Activated CD4-positive, alpha-beta T cell treated with anti-CD3 and anti-CD28 coated beads, Interleukin-2, amount 10 ng/mL, durations not matched to agents 24 days and 14 days (primary cell): ENCODE measurements at regions of chr5 and their contacts with region 1.

Region 1: DNA sequence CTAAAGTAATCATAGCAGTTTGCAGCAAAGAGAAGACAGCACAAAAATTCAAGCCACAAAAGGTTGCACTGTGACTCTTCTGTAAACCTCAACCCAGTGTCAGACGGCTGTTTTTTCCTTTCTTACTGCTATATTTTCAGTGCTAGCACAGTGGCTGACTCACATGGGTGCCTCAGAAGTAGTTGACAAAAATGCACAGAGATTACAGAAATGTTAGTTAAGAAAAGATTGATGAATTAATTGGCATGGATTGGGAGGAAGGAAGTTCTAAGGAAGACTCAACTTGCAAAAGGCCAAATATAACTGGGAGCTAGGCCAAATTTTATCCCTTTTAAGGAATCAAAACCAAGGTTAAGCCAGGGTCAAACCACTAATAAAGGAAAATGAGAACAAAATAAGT is 43.7 kb upstream of the ITGA1 start:
- DNase-seq: peak; percentile 89
- H3K4me3 Mint-ChIP-seq: peak overlapping the region; percentile 31
- H3K27ac Mint-ChIP-seq: peak overlapping the region; percentile 76
- H3K4me1 Mint-ChIP-seq: peaks cover 49% of the 10 kb centered on the region
- H3K27me3 Mint-ChIP-seq: no peaks in the 10 kb centered on the region

Region 2: DNA sequence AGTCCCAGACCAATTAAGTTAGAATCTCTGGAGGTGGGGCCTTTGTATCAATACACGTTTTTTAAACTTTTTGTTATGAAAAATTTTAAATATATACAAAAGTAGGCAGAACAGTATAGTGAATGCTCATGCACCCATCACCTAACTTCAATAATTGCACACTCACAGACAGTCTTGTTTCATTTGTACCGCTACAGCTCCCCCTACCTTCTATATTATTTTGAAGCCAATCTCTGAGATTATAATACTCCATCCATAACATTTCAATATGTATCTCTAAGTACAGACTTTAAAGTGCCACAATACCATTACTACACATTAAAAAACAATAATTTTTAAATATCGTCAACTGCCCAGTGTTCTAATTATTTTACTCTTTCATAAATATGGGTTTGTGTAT is 1327.8 kb before region 1 on chr5:
- intact Hi-C with region 1: no loop called
- DNase-seq: no peak
- H3K4me3 Mint-ChIP-seq: no peak overlapping the region
- H3K27ac Mint-ChIP-seq: no peak overlapping the region
- H3K4me1 Mint-ChIP-seq: no peaks in the 10 kb centered on the region
- H3K27me3 Mint-ChIP-seq: no peaks in the 10 kb centered on the region

Region 3: DNA sequence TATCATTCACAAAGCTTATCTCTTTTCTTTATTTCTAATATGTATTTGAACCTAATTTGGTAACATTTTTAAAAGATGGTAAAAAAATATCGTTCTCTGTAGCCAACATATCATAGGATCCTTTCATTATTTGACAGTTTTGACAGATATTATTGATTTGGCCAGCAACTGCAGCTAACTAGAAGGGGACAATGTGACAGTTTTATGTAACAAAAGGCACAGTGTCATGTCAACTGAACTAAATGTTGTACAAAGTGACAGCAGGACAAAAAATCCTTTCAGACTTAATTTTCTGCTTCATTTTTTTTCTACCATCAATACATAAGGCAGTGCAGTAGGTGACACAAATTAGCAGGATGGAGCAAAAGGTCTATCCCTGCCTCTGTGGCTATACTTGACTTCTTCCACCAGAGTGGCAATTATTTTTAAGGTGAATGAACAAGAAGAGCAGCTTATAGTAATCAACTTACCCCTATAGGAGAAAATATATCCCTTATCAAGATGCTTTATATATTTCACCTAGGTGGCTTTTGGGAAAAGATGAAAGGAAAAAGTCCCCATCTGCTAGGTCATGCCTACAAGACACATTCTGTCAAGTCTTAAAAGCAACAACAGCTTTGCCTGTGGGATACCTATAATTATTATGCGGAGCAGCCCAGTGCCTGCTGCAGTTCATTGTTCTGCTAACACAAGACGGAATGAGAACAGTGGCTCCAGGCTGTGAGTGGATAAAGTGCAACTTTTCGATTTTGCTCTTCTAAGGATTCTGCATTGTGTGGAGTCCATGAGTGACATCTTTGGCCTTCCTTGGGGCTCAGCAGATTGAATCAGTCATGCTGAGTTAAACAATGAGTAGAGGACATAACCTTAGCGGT is 665.8 kb before region 1 on chr5:
- intact Hi-C with region 1: no loop called
- DNase-seq: no peak
- H3K4me3 Mint-ChIP-seq: no peak overlapping the region
- H3K27ac Mint-ChIP-seq: no peak overlapping the region
- H3K4me1 Mint-ChIP-seq: no peaks in the 10 kb centered on the region
- H3K27me3 Mint-ChIP-seq: no peaks in the 10 kb centered on the region

Region 4: GRCh38 chr5:52674815-52675545 is 69.0 kb before region 1 on chr5:
- intact Hi-C with region 1: no loop called
- DNase-seq: no peak
- H3K4me3 Mint-ChIP-seq: no peak overlapping the region
- H3K27ac Mint-ChIP-seq: no peak overlapping the region
- H3K4me1 Mint-ChIP-seq: peaks cover 10% of the 10 kb centered on the region
- H3K27me3 Mint-ChIP-seq: peaks cover 36% of the 10 kb centered on the region

Region 5: DNA sequence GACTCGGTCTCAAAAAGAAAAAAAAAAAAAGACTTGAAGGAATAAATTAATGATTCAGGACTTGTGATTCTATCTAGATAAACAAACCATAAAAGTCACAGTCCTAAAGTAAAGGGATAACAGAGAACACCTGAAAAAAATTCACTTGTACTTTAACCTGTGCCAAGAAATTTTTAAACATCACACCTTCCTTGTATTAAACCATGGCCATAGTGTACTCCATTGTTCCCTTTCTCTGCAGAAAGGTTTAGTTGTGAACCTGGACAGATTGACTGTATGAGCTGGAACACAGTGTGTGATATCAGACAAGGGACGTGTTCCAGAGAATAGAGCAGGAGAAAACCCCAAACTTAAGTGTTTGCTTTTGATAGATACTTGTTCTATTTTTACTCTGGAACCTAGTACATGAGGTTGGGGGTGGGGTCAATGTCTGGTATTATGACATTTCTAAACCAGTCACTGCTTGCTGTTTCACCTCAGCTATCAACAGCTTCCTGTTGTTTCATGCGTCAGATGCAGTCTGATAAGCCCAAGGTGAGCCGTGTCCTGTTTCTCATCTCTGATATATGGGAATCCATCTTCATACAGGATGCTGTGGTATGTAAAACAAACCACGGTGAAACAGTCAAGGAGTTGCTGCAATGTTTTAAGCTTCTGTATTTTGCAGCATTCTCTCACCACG is 18.8 kb before region 1 on chr5:
- intact Hi-C with region 1: loop called (anchors 1 kb)
- DNase-seq: peak; percentile 93
- H3K4me3 Mint-ChIP-seq: peak overlapping the region; percentile 69
- H3K27ac Mint-ChIP-seq: peak overlapping the region; percentile 90
- H3K4me1 Mint-ChIP-seq: peaks cover 50% of the 10 kb centered on the region
- H3K27me3 Mint-ChIP-seq: no peaks in the 10 kb centered on the region

Region 6: DNA sequence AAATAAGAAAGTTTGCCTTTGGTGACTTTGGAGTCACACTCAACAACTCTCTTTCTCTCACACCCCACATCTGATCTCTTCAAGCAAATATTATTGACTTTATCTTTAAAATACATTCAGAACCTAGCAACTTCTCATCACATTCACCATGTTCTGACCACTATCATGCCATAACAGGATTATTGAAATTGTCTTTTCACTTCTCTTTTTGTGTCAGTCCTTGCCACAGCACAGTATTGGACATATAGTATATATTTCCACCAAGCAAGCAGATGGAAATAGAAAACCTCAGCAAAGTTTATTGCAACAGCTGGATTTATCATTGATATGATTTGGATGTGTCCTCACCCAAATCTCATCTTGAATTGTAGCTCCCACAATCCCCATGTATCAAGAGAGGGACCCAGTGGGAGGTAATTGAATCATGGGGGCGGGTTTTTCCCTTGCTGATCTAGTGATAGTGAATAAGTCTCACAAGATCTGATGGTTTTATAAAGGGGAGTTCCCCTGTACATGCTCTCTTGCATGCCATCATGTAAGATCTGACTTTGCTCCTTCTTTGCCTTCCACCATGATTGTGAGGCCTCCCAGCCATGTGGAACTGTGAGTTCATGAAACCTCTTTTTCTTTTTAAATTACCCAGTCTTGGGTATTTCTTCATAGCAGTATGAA is 16.9 kb after region 1 on chr5:
- intact Hi-C with region 1: loop called (anchors 1 kb)
- DNase-seq: no peak
- H3K4me3 Mint-ChIP-seq: no peak overlapping the region
- H3K27ac Mint-ChIP-seq: no peak overlapping the region
- H3K4me1 Mint-ChIP-seq: peaks cover 12% of the 10 kb centered on the region
- H3K27me3 Mint-ChIP-seq: no peaks in the 10 kb centered on the region

Region 7: DNA sequence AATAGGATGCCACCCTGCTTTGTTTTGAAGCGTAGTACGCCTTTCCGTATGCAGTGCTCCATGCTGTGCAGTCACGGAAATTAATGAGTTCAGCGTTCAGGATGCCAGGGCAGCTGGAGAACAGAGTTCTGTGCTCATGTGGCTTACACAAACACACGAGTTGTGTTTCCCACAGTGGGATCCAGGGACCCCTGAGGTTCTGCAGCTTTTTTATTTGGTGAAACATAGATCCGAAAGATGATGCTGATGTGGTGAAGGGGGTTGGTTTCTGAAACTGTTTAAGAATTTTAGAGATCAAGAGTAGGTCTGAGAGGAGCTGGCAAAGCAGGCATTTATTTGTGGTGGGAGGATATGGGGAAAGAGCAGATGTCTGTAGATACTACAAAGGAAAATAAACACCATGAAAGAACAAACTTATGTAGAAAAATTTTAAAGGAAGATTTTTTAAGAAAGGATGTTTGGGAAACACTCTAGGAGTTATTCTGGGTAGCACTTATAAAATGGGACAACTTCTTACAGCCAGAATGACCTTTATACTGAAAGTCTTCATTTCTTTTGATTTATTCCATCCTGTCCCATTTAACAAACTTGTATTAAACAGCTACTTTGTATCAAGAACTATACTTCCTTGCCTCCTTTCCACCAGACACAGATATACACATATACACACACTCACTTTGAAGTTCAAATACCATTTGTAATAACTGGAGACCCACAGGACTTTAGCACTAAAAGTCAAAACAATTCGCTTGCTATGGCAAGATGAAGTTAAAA is 96.5 kb after region 1 on chr5:
- intact Hi-C with region 1: no loop called
- DNase-seq: no peak
- H3K4me3 Mint-ChIP-seq: no peak overlapping the region
- H3K27ac Mint-ChIP-seq: no peak overlapping the region
- H3K4me1 Mint-ChIP-seq: no peaks in the 10 kb centered on the region
- H3K27me3 Mint-ChIP-seq: peaks cover 2% of the 10 kb centered on the region